ENCODE measurements at regions of chr5 and their contacts with region 1.

Region 1: DNA sequence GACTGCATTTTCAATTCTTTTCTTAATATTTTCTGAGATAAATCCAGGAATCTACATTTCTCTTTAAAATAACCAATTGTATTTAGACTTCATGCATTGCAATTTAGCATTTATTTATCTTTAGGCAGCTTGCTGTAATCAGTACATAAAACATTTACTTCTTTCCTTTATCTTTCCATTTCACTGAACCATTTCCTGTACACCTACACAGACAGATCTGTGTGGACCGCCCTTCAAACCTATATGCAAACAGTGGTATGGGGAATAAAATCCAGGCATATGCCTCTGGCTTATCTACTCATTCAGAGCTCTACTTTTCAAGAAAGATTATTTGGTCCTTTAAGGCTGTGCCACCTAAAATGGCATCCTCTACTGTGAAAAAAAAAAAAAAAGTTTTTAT is 640.0 kb downstream of the MAT2B start:
- DNase-seq: no peak
- H3K4me3 ChIP-seq: no peak overlapping the region
- H3K27ac ChIP-seq: no peak overlapping the region
- H3K4me1 ChIP-seq: no peaks in the 10 kb centered on the region
- H3K27me3 ChIP-seq: no peaks in the 10 kb centered on the region
- CTCF ChIP-seq: no peak

Region 2: GRCh38 chr5:163293836-163294235 is 851.6 kb before region 1 on chr5:
- CTCF ChIA-PET with region 1: no interaction called
- dilution Hi-C with region 1: no loop called
- in situ Hi-C with region 1: no loop called
- intact Hi-C with region 1: no loop called
- DNase-seq: no peak
- H3K4me3 ChIP-seq: no peak overlapping the region
- H3K27ac ChIP-seq: no peak overlapping the region
- H3K4me1 ChIP-seq: no peaks in the 10 kb centered on the region
- H3K27me3 ChIP-seq: no peaks in the 10 kb centered on the region
- CTCF ChIP-seq: no peak

Region 3: DNA sequence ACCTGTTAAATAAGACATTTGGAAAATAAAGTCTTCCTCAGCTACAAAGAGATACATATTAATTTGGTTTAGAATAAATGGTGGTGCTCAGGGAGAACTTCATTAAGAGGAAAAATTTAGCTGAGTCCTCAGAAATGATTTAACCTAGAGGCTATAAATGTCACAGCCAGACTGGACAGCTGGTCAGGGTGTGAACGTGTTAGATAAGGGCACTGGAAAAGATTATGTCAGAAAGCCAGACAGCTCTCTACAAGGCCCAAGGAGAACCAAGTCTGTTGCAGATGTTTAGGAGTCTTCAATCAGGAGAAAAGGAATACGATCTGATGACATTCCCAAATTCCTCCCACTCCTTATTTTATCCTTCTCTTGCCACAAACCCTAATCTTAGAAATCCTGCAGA is 374.8 kb before region 1 on chr5:
- CTCF ChIA-PET with region 1: interaction called, 14 read pairs
- dilution Hi-C with region 1: no loop called
- in situ Hi-C with region 1: no loop called
- intact Hi-C with region 1: no loop called
- DNase-seq: no peak
- H3K4me3 ChIP-seq: no peak overlapping the region
- H3K27ac ChIP-seq: no peak overlapping the region
- H3K4me1 ChIP-seq: no peaks in the 10 kb centered on the region
- H3K27me3 ChIP-seq: no peaks in the 10 kb centered on the region
- CTCF ChIP-seq: no peak

Region 4: DNA sequence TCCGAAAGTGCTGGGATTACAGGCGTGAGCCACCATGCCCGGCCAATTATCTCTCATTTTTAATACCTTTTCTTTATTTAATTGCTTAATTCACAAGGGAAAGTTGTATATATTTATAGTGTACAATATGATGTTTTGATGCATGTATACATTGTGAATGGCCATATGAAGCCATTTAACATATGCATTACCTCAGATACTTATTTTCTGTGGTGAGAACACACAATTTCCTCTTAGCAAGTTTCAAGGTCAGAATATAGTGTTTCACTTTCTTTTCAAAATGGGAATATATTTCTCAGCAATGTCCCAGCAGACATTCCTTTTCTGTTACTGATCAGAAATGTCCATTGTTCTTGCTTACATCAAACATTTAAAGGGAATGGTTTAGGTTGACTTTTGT is 956.3 kb after region 1 on chr5:
- CTCF ChIA-PET with region 1: no interaction called
- dilution Hi-C with region 1: no loop called
- in situ Hi-C with region 1: no loop called
- intact Hi-C with region 1: no loop called
- DNase-seq: no peak
- H3K4me3 ChIP-seq: no peak overlapping the region
- H3K27ac ChIP-seq: no peak overlapping the region
- H3K4me1 ChIP-seq: no peaks in the 10 kb centered on the region
- H3K27me3 ChIP-seq: no peaks in the 10 kb centered on the region
- CTCF ChIP-seq: no peak